Prostate gland (tissue), 2 donors: ENCODE measurements at regions of chr2 and their contacts with region 1.

Region 1: DNA sequence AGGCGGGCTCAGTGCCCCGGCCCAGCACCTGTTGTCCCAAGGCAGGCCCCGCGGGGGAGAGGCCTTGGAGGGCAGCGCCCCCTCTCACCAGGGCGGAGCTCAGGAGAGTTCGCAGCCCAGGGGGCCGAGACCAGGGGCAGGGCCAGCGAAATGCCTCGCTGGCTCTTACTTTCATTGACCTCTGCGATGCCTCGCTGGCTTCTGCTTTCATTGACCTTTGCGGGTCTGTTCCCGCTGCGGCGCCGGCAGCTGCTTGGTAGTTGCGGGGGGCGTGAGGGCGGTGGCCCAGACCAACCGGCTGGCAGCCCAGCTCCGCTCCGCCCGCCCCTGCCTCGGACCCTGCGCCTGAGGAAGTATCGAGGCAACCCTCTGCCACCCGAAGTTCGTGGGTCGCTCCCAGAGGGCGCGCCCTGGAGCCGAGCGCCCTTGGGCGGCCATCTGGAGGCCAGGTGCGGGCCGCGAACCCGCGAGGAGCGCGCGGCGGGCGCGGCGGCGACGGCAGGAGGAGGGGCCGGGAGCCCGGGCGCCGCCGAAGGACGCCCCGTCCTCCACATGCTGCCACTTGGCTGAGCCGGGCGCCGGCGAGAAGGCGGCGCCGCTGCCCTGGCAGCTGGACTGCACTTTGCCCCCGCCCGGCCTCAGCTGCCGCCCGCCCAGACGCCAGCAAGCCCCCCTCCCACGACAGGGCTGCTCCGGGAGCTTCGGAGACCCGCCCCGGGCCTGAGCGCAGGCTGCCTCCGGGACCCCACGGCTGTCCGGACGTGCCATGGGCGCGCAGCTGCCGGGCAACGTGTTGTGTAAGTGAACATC is 118.0 kb upstream of the MSTN start:
- DNase-seq: peak; percentile 35
- H3K4me3 ChIP-seq: peak overlapping the region; percentile 46 to 49
- H3K27ac ChIP-seq: peak overlapping the region; percentile 76 to 80
- H3K4me1 ChIP-seq: peaks cover 4% of the 10 kb centered on the region
- H3K27me3 ChIP-seq: no peaks in the 10 kb centered on the region
- CTCF ChIP-seq: peak in 3 of 4 experiments; percentile 32 to 61 (median 51)
- POLR2A ChIP-seq: no peak

Region 2: DNA sequence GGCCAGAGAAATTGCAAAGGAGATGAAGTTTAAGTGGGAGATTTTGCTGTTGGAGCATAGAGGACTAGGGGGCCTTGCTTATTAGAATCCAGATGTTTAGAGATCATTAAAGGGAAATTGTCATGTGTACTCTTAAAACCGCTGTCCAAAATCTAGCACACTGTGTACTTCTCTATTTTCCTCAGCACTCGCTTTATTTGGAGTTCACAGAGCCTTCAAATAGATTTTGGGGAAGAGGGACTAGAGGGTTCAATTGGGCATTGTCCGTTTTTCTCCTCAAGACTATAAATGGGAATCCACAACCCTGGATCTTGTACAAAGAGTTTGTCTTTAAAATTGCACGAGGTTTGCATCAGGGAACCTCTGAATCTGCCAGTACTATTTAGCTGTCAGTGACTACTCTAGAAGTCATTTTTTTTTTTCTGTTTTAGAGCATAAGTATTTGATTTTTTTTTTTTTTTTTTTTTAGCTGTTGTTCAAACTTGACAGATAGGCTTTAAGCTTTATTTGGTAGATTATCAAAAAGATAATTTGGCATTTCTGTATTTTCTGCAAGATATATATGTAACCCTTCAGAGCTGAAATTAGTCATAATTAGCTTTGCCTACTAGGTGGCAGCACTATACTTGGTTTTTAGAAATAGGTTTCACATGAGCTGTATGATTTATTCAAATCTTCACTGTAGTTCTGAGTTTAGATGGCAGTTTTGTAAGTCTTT is 382.0 kb before region 1 on chr2:
- intact Hi-C with region 1: loop called (anchors 10 kb)
- DNase-seq: no peak
- H3K4me3 ChIP-seq: no peak overlapping the region
- H3K27ac ChIP-seq: no peak overlapping the region
- H3K4me1 ChIP-seq: no peaks in the 10 kb centered on the region
- H3K27me3 ChIP-seq: no peaks in the 10 kb centered on the region
- CTCF ChIP-seq: peak in 2 of 4 experiments; percentile 40 to 45
- POLR2A ChIP-seq: no peak

Region 3: DNA sequence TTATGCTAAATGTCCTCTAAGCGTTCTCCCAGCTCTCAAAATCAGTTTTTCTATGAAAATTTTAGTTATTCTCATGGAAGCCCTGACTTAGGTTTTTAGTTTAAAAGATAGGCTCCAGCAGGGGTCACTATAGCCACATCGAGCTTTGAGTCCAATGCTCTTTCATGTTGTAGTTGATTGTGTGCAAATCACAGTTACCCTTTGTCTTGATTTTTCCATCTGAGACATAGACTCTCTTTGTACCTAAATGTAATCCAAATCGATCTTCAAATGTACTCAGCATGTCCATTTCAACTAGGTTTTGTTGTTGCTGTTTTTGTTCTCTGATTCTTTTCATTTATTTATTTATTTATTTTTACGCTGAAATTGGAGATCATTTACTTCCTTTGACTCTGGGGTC is 91.6 kb before region 1 on chr2:
- intact Hi-C with region 1: loop called (anchors 5 kb)
- DNase-seq: peak; percentile 46
- H3K4me3 ChIP-seq: no peak overlapping the region
- H3K27ac ChIP-seq: no peak overlapping the region
- H3K4me1 ChIP-seq: no peaks in the 10 kb centered on the region
- H3K27me3 ChIP-seq: no peaks in the 10 kb centered on the region
- CTCF ChIP-seq: peak; percentile 11 to 80 (median 72)
- POLR2A ChIP-seq: no peak

Region 4: DNA sequence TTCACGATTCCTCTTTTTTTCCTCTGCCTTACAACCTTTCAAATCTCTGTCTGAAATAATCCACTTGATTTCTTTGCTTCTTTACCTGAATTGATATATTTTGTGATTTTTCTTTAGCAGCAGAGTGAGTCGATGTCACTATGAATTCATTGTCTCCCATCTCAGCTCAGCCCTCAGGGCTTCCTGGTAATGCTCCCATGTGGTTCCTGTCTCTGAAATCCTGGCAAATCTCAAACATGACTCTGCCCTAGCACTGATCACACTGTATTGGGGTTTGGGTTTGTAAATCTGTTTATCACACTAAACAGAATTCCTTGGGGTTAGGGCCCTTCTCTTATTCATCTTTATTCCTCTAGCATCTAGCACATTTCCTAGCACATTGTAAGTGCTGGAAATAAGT is 75.0 kb before region 1 on chr2:
- intact Hi-C with region 1: loop called (anchors 5 kb)
- DNase-seq: no peak
- H3K4me3 ChIP-seq: no peak overlapping the region
- H3K27ac ChIP-seq: no peak overlapping the region
- H3K4me1 ChIP-seq: no peaks in the 10 kb centered on the region
- H3K27me3 ChIP-seq: no peaks in the 10 kb centered on the region
- CTCF ChIP-seq: no peak
- POLR2A ChIP-seq: no peak

Region 5: DNA sequence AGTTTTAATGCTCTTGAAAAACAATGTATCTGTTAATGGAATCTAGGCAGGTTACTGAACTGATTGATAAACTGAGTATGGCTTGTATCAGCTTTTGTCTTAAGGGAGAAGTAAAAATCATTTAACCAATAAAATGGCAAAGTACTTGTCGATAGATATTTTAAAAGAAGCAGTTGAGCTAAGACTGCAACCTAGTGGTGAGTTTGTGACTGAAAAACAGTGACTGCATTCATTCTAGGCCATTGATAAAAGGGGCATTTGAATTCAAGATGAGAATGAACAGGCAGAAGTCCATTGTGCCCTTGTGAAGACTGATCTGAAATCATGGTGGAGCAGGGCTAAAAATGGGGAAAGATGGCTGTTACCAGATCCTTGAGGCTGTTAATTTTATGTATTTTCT is 58.5 kb before region 1 on chr2:
- intact Hi-C with region 1: loop called (anchors 5 kb)
- DNase-seq: no peak
- H3K4me3 ChIP-seq: no peak overlapping the region
- H3K27ac ChIP-seq: no peak overlapping the region
- H3K4me1 ChIP-seq: no peaks in the 10 kb centered on the region
- H3K27me3 ChIP-seq: no peaks in the 10 kb centered on the region
- CTCF ChIP-seq: no peak
- POLR2A ChIP-seq: no peak

Region 6: DNA sequence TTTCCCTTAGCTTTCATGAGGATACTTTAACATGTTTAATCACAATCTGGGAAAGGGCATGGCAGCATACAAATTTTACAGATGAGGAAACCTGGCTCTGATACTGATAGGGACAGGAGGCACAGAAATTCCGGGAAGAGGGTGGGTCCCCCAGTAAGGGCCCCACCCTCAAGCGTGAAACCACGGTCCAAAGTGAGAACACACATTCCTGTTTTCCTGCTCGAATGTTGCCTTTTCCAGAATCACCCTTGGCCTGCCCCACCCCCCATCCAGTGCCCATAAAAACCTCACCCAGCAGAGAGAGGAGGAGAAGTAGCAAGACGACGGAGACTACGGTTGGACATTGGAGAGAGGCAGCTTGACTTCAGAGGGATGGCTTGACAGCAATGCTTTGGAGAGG is 40.9 kb after region 1 on chr2:
- intact Hi-C with region 1: no loop called
- DNase-seq: no peak
- H3K4me3 ChIP-seq: no peak overlapping the region
- H3K27ac ChIP-seq: no peak overlapping the region
- H3K4me1 ChIP-seq: no peaks in the 10 kb centered on the region
- H3K27me3 ChIP-seq: no peaks in the 10 kb centered on the region
- CTCF ChIP-seq: no peak
- POLR2A ChIP-seq: no peak

Region 7: DNA sequence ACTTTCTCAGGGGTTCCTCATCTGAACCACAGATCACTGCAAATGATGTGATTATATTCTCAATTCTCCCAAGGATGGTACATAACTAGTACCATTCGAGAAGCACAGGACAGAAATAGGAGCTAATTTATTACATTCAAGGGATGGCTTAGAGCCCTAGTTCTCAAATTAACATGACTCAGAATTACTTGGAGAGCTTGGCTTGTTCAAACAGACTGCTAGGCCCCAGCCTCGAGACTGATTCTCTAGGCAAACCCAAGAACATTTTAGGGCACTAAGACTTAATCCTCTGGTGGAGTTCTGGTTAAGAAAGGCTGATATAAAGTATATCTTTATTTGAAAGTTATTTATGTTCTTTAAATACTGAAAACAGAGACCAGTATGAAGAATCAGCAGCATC is 103.3 kb after region 1 on chr2:
- intact Hi-C with region 1: no loop called
- DNase-seq: no peak
- H3K4me3 ChIP-seq: no peak overlapping the region
- H3K27ac ChIP-seq: no peak overlapping the region
- H3K4me1 ChIP-seq: no peaks in the 10 kb centered on the region
- H3K27me3 ChIP-seq: no peaks in the 10 kb centered on the region
- CTCF ChIP-seq: no peak
- POLR2A ChIP-seq: no peak

Region 8: DNA sequence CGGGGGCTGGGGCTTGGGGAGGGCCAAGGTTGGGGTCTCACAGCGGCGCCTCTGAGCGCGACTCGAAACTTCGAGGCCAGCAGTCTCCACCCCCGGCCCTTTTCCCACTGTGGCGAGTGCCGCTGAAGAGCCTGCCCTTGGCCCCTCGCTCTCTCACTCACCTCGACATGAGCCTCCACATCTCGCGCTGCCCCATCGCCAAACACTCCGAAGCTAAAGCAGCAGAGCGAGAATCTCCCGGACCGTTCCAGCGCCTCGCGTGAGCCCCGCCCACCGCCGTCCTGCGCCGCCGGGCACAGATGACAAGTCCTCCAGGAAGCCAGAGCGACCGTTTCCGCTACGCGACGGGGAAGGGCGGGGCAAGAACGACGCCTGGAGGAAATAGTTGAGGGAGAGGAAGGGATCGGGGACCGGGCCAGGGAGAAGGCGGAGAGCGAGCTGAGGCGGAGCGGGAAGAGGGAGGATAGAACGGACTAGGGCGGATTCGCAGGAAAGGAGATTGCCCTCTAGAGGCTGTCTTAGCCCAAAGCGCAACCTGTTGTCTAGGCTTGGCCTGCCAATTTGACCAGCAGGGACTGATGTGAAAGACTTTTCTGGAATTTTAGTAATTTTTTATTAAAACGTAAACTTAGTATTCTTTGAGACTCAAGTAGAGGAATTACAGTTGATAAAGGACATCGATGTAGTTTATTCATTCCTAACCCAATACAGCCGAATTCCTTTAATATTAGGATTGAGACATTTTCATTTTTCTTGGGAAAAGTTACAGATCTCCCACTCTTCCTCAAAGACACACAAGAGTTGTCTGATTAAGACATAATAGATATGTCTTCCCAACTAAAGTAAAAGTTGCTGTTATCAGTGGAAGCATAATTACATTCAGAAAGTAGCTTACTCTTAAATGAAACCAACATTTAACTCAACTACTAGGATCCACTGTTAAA is 139.3 kb after region 1 on chr2 and contains the start of gene HIBCH:
- intact Hi-C with region 1: loop called (anchors 1 kb)
- DNase-seq: peak; percentile 99
- H3K4me3 ChIP-seq: peak within 1 kb of the TSS; percentile 64 to 67
- H3K27ac ChIP-seq: peak within 1 kb of the TSS; percentile 93 to 95
- H3K4me1 ChIP-seq: no peaks in the 10 kb centered on the region
- H3K27me3 ChIP-seq: no peaks in the 10 kb centered on the region
- CTCF ChIP-seq: peak; percentile 47 to 86 (median 78)
- POLR2A ChIP-seq: peak; percentile 89
- total RNA-seq, gene HIBCH: 25.3 to 27.8 TPM